Activated CD4-positive, alpha-beta T cell treated with anti-CD3 and anti-CD28 coated beads, Interleukin-2, amount 10 ng/mL, durations not matched to agents 24 days and 14 days (primary cell): ENCODE measurements at regions of chr2 and their contacts with region 1.

Region 1: GRCh38 chr2:37196320-37197195 is at the start of gene CEBPZOS:
- DNase-seq: peak; percentile 96
- H3K4me3 Mint-ChIP-seq: peak within 1 kb of the TSS; percentile 92
- H3K27ac Mint-ChIP-seq: peak within 1 kb of the TSS; percentile 98
- H3K4me1 Mint-ChIP-seq: peaks cover 19% of the 10 kb centered on the region
- H3K27me3 Mint-ChIP-seq: peaks cover 3% of the 10 kb centered on the region
- total RNA-seq, gene CEBPZOS: 43.4 and 46.6 TPM in 2 replicates

Region 2: GRCh38 chr2:37083873-37084794 is 112.4 kb before region 1 on chr2 and contains the starts of genes GPATCH11 and HEATR5B:
- intact Hi-C with region 1: loop called (anchors 1 kb)
- DNase-seq: peak; percentile 98
- H3K4me3 Mint-ChIP-seq: no peak within 1 kb of the TSS
- H3K27ac Mint-ChIP-seq: no peak within 1 kb of the TSS
- H3K4me1 Mint-ChIP-seq: peaks cover 36% of the 10 kb centered on the region
- H3K27me3 Mint-ChIP-seq: no peaks in the 10 kb centered on the region
- total RNA-seq, gene GPATCH11: 13.8 and 15.7 TPM in 2 replicates
- total RNA-seq, gene HEATR5B: 14.7 and 14.8 TPM in 2 replicates

Region 3: GRCh38 chr2:37215250-37215649 is 18.7 kb after region 1 on chr2:
- intact Hi-C with region 1: no loop called
- DNase-seq: no peak
- H3K4me3 Mint-ChIP-seq: no peak overlapping the region
- H3K27ac Mint-ChIP-seq: no peak overlapping the region
- H3K4me1 Mint-ChIP-seq: peaks cover 4% of the 10 kb centered on the region
- H3K27me3 Mint-ChIP-seq: no peaks in the 10 kb centered on the region